Activated B cell treated with CpG ODN at 0.5 μM for 24 hours (primary cell): ENCODE measurements at regions of chr10 and their contacts with region 1.

Region 1: GRCh38 chr10:6348096-6348874 is 145.6 kb downstream of the PFKFB3 start:
- DNase-seq: peak; percentile 65
- ATAC-seq: peak; percentile 91
- H3K4me3 Mint-ChIP-seq: peak overlapping the region; percentile 80
- H3K27ac Mint-ChIP-seq: peak overlapping the region; percentile 97
- H3K4me1 Mint-ChIP-seq: peaks cover 57% of the 10 kb centered on the region
- H3K27me3 Mint-ChIP-seq: no peaks in the 10 kb centered on the region
- CTCF ChIP-seq: no peak

Region 2: GRCh38 chr10:6163364-6164270 is 184.7 kb before region 1 on chr10:
- CTCF ChIA-PET with region 1: no interaction called
- POLR2A ChIA-PET with region 1: interaction called, 12 read pairs
- intact Hi-C with region 1: no loop called
- DNase-seq: peak; percentile 90
- ATAC-seq: peak; percentile 98
- H3K4me3 Mint-ChIP-seq: peak overlapping the region; percentile 96
- H3K27ac Mint-ChIP-seq: peak overlapping the region; percentile 97
- H3K4me1 Mint-ChIP-seq: peaks cover 34% of the 10 kb centered on the region
- H3K27me3 Mint-ChIP-seq: no peaks in the 10 kb centered on the region
- CTCF ChIP-seq: no peak

Region 3: DNA sequence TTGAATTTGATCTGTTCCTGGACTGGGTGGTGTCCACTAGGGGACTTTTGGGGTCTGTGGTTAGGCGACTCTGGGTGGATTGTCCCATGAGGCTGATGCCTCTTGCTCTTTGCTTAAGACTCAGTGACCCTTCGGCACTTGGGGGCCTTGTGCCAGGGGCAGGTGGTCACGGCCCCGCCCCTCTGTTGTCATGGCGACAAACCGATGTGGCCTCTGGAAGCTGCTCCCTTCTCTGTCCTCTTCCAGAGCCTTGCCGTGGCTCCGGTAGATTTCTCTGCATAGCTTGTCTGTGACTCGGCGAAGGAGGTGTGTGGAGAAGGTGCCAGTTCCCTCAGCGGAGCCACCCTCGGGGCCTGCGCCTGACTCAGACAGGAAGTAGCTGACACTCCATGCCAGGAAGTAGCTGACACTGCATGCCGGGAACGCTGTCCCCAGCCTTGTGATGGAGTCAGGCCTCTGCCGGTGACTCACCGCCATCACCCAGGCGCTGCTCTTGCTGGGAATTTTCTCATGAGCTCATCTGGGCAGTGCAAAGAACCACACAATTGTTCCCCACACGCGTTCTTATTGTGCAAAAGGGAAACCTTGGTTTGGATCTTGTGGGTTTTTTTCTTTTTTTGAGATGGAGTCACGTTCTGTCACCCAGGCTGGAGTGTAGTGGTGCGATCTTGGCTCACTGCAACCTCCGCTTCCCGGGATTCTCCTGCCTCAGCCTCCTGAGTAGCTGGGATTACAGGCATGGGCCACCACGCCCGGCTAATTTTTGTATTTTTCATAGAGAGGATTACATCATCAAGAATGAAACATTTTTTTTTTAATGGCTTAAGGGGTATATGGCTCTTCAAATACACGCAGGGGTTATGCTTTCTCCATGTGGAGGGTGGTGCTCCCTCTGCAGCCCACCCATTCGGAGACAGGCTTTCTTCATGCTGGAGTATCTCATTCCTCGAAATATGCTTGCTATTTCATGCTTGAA is 73.0 kb before region 1 on chr10:
- CTCF ChIA-PET with region 1: interaction called, 4 read pairs
- POLR2A ChIA-PET with region 1: interaction called, 29 read pairs
- intact Hi-C with region 1: loop called (anchors 1 kb)
- DNase-seq: peak; percentile 62
- ATAC-seq: peak; percentile 94
- H3K4me3 Mint-ChIP-seq: peak overlapping the region; percentile 80
- H3K27ac Mint-ChIP-seq: peak overlapping the region; percentile 93
- H3K4me1 Mint-ChIP-seq: peaks cover 28% of the 10 kb centered on the region
- H3K27me3 Mint-ChIP-seq: no peaks in the 10 kb centered on the region
- CTCF ChIP-seq: no peak

Region 4: DNA sequence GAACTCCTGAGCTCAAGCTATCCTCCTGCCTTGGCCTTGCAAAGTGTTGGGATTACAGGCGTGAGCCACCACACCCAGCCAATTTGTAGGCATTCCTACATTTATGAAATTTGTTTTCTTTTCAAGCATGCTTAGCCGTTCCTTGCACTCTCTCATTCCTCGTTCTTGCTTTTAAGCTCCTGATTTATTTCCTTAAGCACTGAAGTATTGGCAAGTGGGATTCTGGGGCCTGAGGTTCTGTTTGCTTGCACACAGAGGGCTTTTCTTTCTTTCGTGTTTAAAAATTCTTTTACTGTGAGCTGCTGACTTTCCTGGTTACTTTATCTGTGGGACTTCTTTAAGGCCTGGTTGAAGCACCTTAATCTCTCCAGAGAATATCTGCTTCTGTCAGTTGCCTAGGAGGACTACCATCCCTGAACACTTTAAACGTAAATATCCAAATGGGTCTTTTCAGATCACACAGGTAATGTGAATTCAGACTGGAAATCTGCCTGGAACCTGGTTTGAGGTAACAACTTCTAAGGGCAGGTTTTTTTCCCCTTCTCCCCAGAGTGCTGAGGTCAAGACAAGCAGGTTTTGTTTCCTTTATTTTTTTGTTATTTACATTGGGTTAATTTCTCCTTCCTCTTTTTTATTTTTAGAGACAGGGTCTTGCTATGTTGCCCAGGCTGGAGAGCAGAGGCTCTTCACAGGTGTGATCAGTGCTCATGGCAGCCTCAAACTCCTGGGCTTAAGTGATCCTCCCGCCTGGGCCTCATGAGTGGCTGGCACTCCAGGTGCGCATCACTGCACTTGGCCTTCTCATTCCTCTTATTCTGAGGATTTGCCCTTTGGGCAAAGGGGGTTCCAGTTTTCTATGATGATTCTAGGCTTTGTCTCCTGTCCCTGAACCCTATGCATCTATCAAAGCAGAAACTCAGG is 42.6 kb before region 1 on chr10:
- CTCF ChIA-PET with region 1: interaction called, 26 read pairs
- POLR2A ChIA-PET with region 1: interaction called, 129 read pairs
- intact Hi-C with region 1: loop called (anchors 1 kb)
- DNase-seq: no peak
- ATAC-seq: peak; percentile 73
- H3K4me3 Mint-ChIP-seq: peak overlapping the region; percentile 52
- H3K27ac Mint-ChIP-seq: peak overlapping the region; percentile 71
- H3K4me1 Mint-ChIP-seq: peaks cover 53% of the 10 kb centered on the region
- H3K27me3 Mint-ChIP-seq: no peaks in the 10 kb centered on the region
- CTCF ChIP-seq: no peak

Region 5: GRCh38 chr10:6328699-6329423 is 19.4 kb before region 1 on chr10:
- CTCF ChIA-PET with region 1: interaction called, 10 read pairs
- POLR2A ChIA-PET with region 1: interaction called, 37 read pairs
- intact Hi-C with region 1: loop called (anchors 2 kb)
- DNase-seq: peak; percentile 32
- ATAC-seq: peak; percentile 73
- H3K4me3 Mint-ChIP-seq: peak overlapping the region; percentile 61
- H3K27ac Mint-ChIP-seq: peak overlapping the region; percentile 80
- H3K4me1 Mint-ChIP-seq: peaks cover 27% of the 10 kb centered on the region
- H3K27me3 Mint-ChIP-seq: no peaks in the 10 kb centered on the region
- CTCF ChIP-seq: no peak

Region 6: GRCh38 chr10:6382081-6382480 is 33.8 kb after region 1 on chr10:
- CTCF ChIA-PET with region 1: interaction called, 6 read pairs
- POLR2A ChIA-PET with region 1: interaction called, 54 read pairs
- intact Hi-C with region 1: loop called (anchors 1 kb)
- DNase-seq: no peak
- ATAC-seq: peak; percentile 90
- H3K4me3 Mint-ChIP-seq: peak overlapping the region; percentile 72
- H3K27ac Mint-ChIP-seq: peak overlapping the region; percentile 82
- H3K4me1 Mint-ChIP-seq: peaks cover 25% of the 10 kb centered on the region
- H3K27me3 Mint-ChIP-seq: no peaks in the 10 kb centered on the region
- CTCF ChIP-seq: no peak